Gastrocnemius medialis (tissue), 4 donors: ENCODE measurements at regions of chr3 and their contacts with region 1.

Region 1: DNA sequence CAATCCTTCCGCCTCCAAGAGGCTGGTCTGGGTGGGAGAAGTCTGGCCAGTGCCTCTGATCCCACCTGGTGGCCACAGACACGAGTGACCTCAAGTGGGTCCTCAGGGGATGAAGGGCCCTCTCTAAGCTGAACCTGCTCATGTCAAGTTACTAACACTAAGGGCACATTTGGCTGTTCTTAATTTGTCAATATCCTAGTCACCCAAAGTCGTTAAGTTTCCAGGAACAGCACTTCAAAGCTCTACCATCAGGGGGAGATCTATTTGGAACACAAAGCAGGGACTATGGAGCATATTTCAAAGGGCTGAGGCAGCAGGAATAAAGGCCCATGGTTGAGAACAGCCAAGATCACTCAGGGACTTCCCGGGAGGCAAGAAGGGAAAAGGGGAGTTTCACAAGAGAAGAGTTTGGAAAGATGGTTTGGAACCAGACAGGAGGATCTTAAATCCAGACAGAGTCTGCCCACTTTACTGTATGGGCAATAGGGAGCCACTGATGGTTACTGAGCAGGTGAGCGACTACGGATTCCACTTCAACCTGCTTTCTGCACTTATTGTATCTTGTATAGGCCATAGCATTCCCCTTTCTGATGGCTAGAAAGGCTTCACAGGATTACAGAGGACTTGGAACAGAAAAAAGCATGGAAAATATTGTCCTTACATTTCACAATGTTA is 13.7 kb downstream of the OXTR start:
- DNase-seq: no peak
- ATAC-seq: no peak
- H3K4me3 ChIP-seq: no peak overlapping the region
- H3K27ac ChIP-seq: no peak overlapping the region
- H3K4me1 ChIP-seq: peaks cover 26 to 32% of the 10 kb centered on the region in 2 donors
- H3K27me3 ChIP-seq: no peaks in the 10 kb centered on the region
- CTCF ChIP-seq: peak in 1 of 5 experiments; percentile 13
- POLR2A ChIP-seq: no peak

Region 2: GRCh38 chr3:8650583-8651416 is 104.9 kb before region 1 on chr3:
- in situ Hi-C with region 1: no loop called
- intact Hi-C with region 1: no loop called
- DNase-seq: no peak
- ATAC-seq: no peak
- H3K4me3 ChIP-seq: no peak overlapping the region
- H3K27ac ChIP-seq: no peak overlapping the region
- H3K4me1 ChIP-seq: no peaks in the 10 kb centered on the region
- H3K27me3 ChIP-seq: no peaks in the 10 kb centered on the region
- CTCF ChIP-seq: no peak
- POLR2A ChIP-seq: no peak

Region 3: DNA sequence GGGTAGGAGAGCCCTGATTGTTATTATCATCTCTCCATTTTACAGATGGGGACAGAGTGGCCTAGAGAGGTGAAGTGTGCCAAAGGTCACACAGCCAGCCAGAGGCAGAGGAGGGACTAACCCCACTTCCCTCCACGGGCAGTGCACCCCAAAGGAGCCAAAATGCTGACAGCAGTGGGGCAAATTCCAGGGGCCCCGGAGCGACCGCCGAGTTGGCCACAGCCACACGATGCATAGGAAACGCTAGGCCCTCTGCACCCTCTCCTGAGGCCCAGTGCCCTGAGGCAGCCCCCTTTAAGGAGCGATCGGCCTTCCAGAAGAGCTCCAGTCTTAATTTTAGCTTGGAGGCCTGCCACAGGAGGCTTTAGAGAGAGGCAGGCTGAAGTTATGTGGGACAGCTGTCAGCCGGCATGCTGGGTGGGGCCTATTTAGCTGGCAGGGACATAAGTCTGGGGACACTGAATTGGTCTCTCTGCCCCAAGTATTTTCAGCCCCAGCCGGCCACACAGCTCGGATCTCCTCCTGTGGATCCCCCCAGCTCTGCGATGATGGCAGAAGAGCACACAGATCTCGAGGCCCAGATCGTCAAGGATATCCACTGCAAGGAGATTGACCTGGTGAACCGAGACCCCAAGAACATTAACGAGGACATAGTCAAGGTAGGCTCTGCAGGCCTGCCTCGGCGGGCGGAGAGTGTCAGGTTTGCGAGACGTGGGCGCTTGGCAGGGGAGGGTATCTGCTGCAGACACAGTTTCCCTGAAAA is 22.2 kb before region 1 on chr3 and contains the start of gene CAV3:
- in situ Hi-C with region 1: no loop called
- intact Hi-C with region 1: loop called (anchors 1 kb)
- DNase-seq: peak; percentile 74 to 89
- ATAC-seq: peak; percentile 79 to 86
- H3K4me3 ChIP-seq: peak within 1 kb of the TSS; percentile 25 to 69 (median 52)
- H3K27ac ChIP-seq: peak within 1 kb of the TSS; percentile 89 to 98 (median 92)
- H3K4me1 ChIP-seq: peaks cover 23 to 44% of the 10 kb centered on the region in 2 donors
- H3K27me3 ChIP-seq: no peaks in the 10 kb centered on the region
- CTCF ChIP-seq: no peak
- POLR2A ChIP-seq: peak; percentile 36 to 41
- total RNA-seq, gene CAV3: 12.0 to 19.7 (median 14.3) TPM

Region 4: DNA sequence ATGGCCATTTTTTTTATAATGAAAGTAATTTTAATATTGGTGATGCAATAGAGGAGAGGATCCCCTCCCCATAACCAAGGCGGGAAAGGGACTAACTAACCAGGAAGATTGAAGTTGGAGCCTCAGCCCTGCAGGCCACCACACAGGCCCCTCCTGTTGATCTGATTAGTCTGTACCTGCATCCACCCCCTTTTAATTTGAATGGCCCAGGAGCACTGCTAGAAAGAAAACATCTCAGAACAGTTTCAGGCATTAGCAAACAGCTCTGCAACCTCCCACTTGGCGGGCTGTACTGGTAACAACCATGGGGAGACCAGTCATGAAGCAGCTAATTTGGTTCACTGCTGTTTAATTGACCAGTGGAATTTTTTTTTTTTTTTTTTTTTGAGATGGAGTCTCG is 11.8 kb before region 1 on chr3:
- in situ Hi-C with region 1: no loop called
- intact Hi-C with region 1: no loop called
- DNase-seq: no peak
- ATAC-seq: no peak
- H3K4me3 ChIP-seq: no peak overlapping the region
- H3K27ac ChIP-seq: no peak overlapping the region
- H3K4me1 ChIP-seq: peaks cover 29 to 45% of the 10 kb centered on the region in 2 donors
- H3K27me3 ChIP-seq: no peaks in the 10 kb centered on the region
- CTCF ChIP-seq: no peak
- POLR2A ChIP-seq: no peak

Region 5: DNA sequence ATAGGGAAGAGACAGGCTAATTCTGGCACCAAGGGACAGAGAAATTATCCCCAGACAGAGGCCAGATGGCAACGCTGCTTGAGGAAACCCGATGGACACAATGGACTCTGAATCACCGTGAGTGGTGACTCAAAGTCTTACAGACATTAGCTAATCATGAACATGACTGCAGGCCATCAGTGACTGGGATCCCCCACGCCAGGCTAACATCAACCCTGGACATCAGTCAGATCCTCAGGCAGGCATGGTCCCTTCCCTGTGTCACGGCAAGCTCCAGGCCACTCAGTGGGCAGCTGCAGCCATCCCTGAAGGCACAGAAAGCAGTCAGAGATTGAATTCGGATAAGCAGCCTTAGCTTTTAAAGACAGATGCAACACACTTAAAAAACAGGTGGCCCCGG is 37.5 kb after region 1 on chr3:
- in situ Hi-C with region 1: no loop called
- intact Hi-C with region 1: no loop called
- DNase-seq: no peak
- ATAC-seq: no peak
- H3K4me3 ChIP-seq: no peak overlapping the region
- H3K27ac ChIP-seq: no peak overlapping the region
- H3K4me1 ChIP-seq: no peaks in the 10 kb centered on the region
- H3K27me3 ChIP-seq: no peaks in the 10 kb centered on the region
- CTCF ChIP-seq: no peak
- POLR2A ChIP-seq: no peak

Region 6: GRCh38 chr3:8851719-8852118 is 96.0 kb after region 1 on chr3:
- in situ Hi-C with region 1: no loop called
- intact Hi-C with region 1: no loop called
- DNase-seq: no peak
- ATAC-seq: no peak
- H3K4me3 ChIP-seq: no peak overlapping the region
- H3K27ac ChIP-seq: no peak overlapping the region
- H3K4me1 ChIP-seq: peaks cover 0 to 4% of the 10 kb centered on the region in 2 donors
- H3K27me3 ChIP-seq: no peaks in the 10 kb centered on the region
- CTCF ChIP-seq: no peak
- POLR2A ChIP-seq: no peak